Common myeloid progenitor, CD34-positive (primary cell): ENCODE measurements at regions of chr20 and their contacts with region 1.

Region 1: GRCh38 chr20:38446441-38447209 is 11.5 kb upstream of the SNHG17 start:
- DNase-seq: peak; percentile 96 to 98 (median 97)
- H3K4me3 ChIP-seq: peak overlapping the region; percentile 64 to 93 (median 84)
- H3K27ac ChIP-seq: peak overlapping the region; percentile 56 to 85
- H3K4me1 ChIP-seq: peaks cover 0 to 19% (median 14%) of the 10 kb centered on the region in 4 experiments
- H3K27me3 ChIP-seq: no peaks in the 10 kb centered on the region

Region 2: GRCh38 chr20:38434743-38435554 is 11.7 kb before region 1 on chr20 and contains the start of gene SNHG17:
- CTCF ChIA-PET with region 1: interaction called, 85 read pairs
- POLR2A ChIA-PET with region 1: interaction called, 19 read pairs
- DNase-seq: peak; percentile 95 to 97 (median 97)
- H3K4me3 ChIP-seq: peak within 1 kb of the TSS; percentile 74 to 96 (median 79)
- H3K27ac ChIP-seq: peak within 1 kb of the TSS; percentile 55 to 87
- H3K4me1 ChIP-seq: peaks cover 0 to 28% (median 21%) of the 10 kb centered on the region in 4 experiments
- H3K27me3 ChIP-seq: no peaks in the 10 kb centered on the region